Gastrocnemius medialis (tissue), 4 donors: ENCODE measurements at regions of chrX and their contacts with region 1.

Region 1: GRCh38 chrX:129613596-129613995 is 41.2 kb downstream of the APLN start:
- DNase-seq: no peak
- ATAC-seq: no peak
- H3K4me3 ChIP-seq: no peak overlapping the region
- H3K27ac ChIP-seq: no peak overlapping the region
- H3K4me1 ChIP-seq: peaks cover 0 to 5% of the 10 kb centered on the region in 2 donors
- H3K27me3 ChIP-seq: no peaks in the 10 kb centered on the region
- CTCF ChIP-seq: no peak
- POLR2A ChIP-seq: no peak

Region 2: GRCh38 chrX:129823115-129823514 is 209.5 kb after region 1 on chrX:
- in situ Hi-C with region 1: loop called in 1 of 4 experiments (anchors 25 kb)
- intact Hi-C with region 1: loop called (anchors 5 kb)
- DNase-seq: no peak
- ATAC-seq: no peak
- H3K4me3 ChIP-seq: no peak overlapping the region
- H3K27ac ChIP-seq: no peak overlapping the region
- H3K4me1 ChIP-seq: no peaks in the 10 kb centered on the region
- H3K27me3 ChIP-seq: no peaks in the 10 kb centered on the region
- CTCF ChIP-seq: peak in 3 of 5 experiments; percentile 19 to 43 (median 32)
- POLR2A ChIP-seq: no peak